Transverse colon (tissue), 4 donors: ENCODE measurements at regions of chr4 and their contacts with region 1.

Region 1: GRCh38 chr4:170047771-170048354 is 21.7 kb upstream of the MFAP3L start:
- DNase-seq: peak; percentile 50
- H3K4me3 ChIP-seq: no peak overlapping the region
- H3K27ac ChIP-seq: no peak overlapping the region
- H3K4me1 ChIP-seq: no peaks in the 10 kb centered on the region
- H3K27me3 ChIP-seq: peaks cover 3% of the 10 kb centered on the region
- CTCF ChIP-seq: peak; percentile 71 to 84 (median 79)
- EP300 ChIP-seq: no peak
- POLR2A ChIP-seq: no peak

Region 2: DNA sequence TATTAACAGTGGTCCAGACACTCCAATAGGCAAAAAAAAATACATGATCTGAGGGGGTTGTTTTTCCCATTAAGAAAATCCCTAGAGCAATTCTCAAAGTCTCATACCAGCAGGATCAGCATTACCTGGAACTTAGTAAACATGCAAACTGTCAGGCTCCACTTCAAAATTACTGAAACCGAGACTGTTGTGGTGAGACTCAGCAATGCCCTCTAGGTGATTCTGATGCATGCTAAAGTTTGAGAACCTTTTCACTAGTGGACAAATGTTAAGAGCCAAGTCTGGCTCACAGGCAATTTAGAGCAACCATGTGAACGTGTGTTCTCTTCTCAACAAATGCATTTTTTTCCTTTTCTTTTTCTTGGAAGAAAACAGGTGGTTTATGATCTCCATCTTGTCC is 465.7 kb before region 1 on chr4:
- in situ Hi-C with region 1: loop called in 1 of 4 experiments (anchors 25 kb)
- intact Hi-C with region 1: no loop called
- DNase-seq: no peak
- H3K4me3 ChIP-seq: no peak overlapping the region
- H3K27ac ChIP-seq: no peak overlapping the region
- H3K4me1 ChIP-seq: no peaks in the 10 kb centered on the region
- H3K27me3 ChIP-seq: no peaks in the 10 kb centered on the region
- CTCF ChIP-seq: no peak
- EP300 ChIP-seq: no peak
- POLR2A ChIP-seq: no peak

Region 3: DNA sequence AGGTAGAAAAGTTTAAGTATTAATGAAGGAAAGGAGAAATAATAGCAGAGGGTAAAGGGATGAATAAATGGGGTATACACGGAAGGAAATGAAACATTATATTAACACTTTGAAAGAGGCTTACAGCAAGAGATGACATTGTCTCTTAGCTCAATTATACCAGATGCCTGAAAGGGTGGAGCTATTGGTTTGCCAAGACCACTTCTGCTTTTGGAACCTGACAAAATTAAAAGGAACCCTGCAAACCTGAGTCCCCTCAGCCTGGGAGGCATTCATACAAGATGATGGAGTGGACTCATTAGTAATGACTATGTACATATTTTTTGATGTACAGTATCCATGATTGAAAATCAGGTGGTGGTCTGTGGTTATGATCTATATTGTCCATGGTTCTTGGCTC is 245.0 kb before region 1 on chr4:
- in situ Hi-C with region 1: loop called in 1 of 4 experiments (anchors 10 kb)
- intact Hi-C with region 1: no loop called
- DNase-seq: no peak
- H3K4me3 ChIP-seq: no peak overlapping the region
- H3K27ac ChIP-seq: no peak overlapping the region
- H3K4me1 ChIP-seq: no peaks in the 10 kb centered on the region
- H3K27me3 ChIP-seq: no peaks in the 10 kb centered on the region
- CTCF ChIP-seq: no peak
- EP300 ChIP-seq: no peak
- POLR2A ChIP-seq: no peak

Region 4: GRCh38 chr4:169810325-169811323 is 237.2 kb before region 1 on chr4:
- in situ Hi-C with region 1: loop called (anchors 10 kb)
- intact Hi-C with region 1: loop called (anchors 1 kb)
- DNase-seq: peak; percentile 10
- H3K4me3 ChIP-seq: no peak overlapping the region
- H3K27ac ChIP-seq: no peak overlapping the region
- H3K4me1 ChIP-seq: no peaks in the 10 kb centered on the region
- H3K27me3 ChIP-seq: no peaks in the 10 kb centered on the region
- CTCF ChIP-seq: peak; percentile 77 to 87 (median 81)
- EP300 ChIP-seq: no peak
- POLR2A ChIP-seq: no peak

Region 5: DNA sequence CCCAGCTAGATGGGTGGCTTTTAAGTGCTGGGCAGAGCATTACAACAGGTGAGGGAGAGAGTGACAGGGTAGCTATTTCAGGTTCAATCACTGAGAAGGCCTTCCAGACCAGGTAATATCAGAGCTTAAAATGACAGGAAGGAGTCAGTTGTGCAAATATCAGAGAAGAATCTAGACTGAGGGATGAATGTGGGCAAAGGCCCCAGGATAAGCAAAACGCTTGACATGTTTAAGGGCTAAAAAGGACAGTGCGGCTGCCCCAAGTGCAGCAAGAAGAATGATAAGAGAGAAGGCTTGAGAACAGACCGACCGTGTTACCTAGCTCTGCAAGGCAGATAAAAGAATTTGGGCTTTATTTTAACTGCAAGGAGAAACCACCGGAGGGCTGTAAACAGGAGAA is 23.3 kb after region 1 on chr4:
- in situ Hi-C with region 1: no loop called
- intact Hi-C with region 1: no loop called
- DNase-seq: no peak
- H3K4me3 ChIP-seq: no peak overlapping the region
- H3K27ac ChIP-seq: no peak overlapping the region
- H3K4me1 ChIP-seq: no peaks in the 10 kb centered on the region
- H3K27me3 ChIP-seq: no peaks in the 10 kb centered on the region
- CTCF ChIP-seq: no peak
- EP300 ChIP-seq: no peak
- POLR2A ChIP-seq: no peak

Region 6: DNA sequence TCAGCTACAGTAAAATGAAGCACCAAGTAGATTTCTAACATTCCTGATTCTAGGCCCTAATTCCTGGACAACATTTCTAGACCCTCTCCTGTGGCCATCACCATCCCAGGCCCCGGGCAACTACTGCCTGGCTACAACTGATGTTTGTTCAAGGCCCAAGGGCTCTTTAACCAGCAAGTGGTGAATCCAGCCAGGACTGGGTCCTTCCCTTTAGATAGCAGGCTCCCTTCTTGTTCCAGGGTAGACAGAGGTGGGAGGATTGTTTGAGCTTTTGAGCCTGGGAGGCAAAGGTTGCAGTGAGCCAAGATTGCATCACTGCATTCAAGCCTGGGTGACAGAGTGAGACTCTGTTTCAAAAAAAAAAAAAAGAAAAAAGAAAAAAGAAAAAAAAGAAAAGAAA is 54.6 kb after region 1 on chr4:
- in situ Hi-C with region 1: no loop called
- intact Hi-C with region 1: no loop called
- DNase-seq: no peak
- H3K4me3 ChIP-seq: no peak overlapping the region
- H3K27ac ChIP-seq: no peak overlapping the region
- H3K4me1 ChIP-seq: no peaks in the 10 kb centered on the region
- H3K27me3 ChIP-seq: no peaks in the 10 kb centered on the region
- CTCF ChIP-seq: no peak
- EP300 ChIP-seq: no peak
- POLR2A ChIP-seq: no peak